OCI-LY7 (cell line): ENCODE measurements at regions of chr21 and their contacts with region 1.

Region 1: DNA sequence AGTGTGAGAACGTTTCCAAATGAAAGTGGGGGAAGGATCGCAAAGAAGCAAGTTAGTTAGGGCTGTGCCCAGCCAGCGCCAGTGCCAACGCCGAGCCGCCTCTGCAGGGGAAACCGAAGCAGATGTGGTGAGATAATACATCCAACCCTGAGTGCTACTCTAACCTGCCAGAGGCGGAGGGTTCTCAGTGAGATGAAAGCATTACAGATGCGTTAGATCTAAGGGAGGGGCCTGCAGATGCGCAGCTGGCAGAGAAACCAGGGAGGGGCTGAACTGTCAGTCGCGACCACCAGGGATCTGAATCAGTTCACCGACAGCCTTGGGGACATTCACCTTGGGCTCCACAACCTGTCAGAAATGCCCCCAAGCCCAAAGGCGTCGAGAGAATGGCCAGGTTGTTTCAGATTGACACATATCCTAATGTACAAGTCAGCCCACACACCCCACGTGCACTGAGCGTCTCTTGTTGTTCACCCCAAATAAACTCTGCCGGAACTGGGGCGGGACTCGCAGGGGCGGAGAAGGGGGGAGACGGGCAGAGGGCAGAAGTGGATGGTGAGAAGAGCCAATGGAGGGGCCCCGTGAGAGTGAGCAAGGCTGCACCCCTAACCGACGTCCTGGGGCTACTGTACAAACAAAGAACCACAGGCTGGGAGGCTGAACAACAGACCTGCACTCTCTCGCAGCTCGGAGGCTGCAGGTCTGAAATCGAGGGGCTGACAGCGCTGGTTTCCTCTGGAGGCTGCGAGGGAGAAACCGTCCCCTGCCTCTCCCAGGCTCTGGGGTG is 8.7 kb upstream of the UMODL1 start:
- DNase-seq: peak; percentile 93
- H3K4me3 ChIP-seq: peak overlapping the region; percentile 68
- H3K27ac ChIP-seq: peak overlapping the region; percentile 93
- H3K4me1 ChIP-seq: peaks cover 75% of the 10 kb centered on the region
- CTCF ChIP-seq: no peak

Region 2: DNA sequence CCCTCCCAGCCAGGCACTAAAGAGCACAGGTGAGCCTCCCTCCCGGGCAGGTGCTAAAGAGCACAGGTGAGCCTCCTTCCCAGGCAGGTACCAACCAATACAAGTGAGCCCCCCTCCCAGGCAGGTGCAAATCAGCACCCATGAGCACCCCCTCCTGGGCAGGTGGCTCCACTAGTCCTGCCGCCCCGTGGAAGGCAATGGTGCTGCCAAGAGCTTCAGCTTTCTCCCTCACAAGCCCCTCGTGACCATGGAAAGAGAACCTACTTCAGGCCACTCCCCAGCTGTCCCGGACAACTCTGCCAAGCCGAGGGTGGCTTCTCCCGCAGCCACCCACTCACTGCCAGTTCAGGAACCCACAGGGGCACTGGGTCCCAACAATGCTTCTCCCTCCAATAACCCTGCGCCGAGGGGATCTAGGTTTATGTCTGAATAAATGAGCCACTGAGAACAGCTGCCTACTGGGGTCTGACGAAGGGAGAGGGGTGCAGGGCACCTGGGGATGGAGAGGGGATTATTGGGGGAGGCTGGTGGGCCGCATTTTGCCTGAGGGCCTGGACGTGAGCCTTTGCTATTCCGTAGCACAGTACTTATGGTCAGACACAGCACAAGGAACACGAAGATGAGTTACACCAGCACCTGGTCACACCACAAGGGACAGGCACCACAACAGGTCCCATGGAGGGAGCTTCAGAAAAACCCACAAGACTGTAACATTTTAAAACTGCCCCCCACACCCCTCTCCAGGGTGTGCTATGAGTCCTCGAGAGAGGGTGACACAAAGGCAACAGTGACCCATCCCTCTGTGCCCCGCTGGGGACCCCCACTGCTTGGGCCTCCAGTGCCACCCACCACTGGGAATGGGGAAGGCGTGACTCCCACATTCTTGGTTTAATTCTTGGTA is 229.6 kb before region 1 on chr21:
- CTCF ChIA-PET with region 1: no interaction called
- POLR2A ChIA-PET with region 1: no interaction called
- intact Hi-C with region 1: loop called (anchors 2 kb)
- DNase-seq: peak; percentile 77
- H3K4me3 ChIP-seq: peak overlapping the region; percentile 43
- H3K27ac ChIP-seq: peak overlapping the region; percentile 95
- H3K4me1 ChIP-seq: peaks cover 71% of the 10 kb centered on the region
- CTCF ChIP-seq: peak; percentile 66

Region 3: GRCh38 chr21:41885341-41886029 is 176.9 kb before region 1 on chr21:
- CTCF ChIA-PET with region 1: no interaction called
- POLR2A ChIA-PET with region 1: no interaction called
- intact Hi-C with region 1: no loop called
- DNase-seq: peak; percentile 28
- H3K4me3 ChIP-seq: no peak overlapping the region
- H3K27ac ChIP-seq: no peak overlapping the region
- H3K4me1 ChIP-seq: peaks cover 18% of the 10 kb centered on the region
- CTCF ChIP-seq: 0 out of 2 replicates have a peak, but pooled peaks have one; percentile 30

Region 4: DNA sequence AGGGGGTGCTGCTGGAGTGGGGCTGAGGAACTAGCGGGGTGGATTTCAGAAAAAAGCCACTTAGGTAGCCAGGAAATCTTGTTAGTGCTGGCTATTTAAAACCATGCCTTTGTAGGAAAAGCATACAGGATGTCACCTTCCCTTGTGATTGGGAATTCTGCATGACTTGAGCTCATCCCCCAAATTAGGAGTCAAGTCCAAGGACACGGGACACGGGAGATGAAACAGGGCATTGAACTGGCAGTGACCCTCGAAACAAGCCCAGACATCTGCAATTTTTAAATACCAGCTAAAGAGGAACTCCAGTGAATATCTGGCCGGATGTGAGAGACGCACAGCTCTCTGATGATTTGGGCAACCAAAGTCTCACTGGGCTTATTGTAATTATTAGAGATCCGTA is 141.4 kb before region 1 on chr21:
- CTCF ChIA-PET with region 1: no interaction called
- POLR2A ChIA-PET with region 1: interaction called, 9 read pairs
- intact Hi-C with region 1: loop called (anchors 2 kb)
- DNase-seq: peak; percentile 77
- H3K4me3 ChIP-seq: no peak overlapping the region
- H3K27ac ChIP-seq: peak overlapping the region; percentile 74
- H3K4me1 ChIP-seq: peaks cover 54% of the 10 kb centered on the region
- CTCF ChIP-seq: no peak

Region 5: GRCh38 chr21:42107881-42108553 is 45.6 kb after region 1 on chr21:
- CTCF ChIA-PET with region 1: interaction called, 3 read pairs
- POLR2A ChIA-PET with region 1: interaction called, 11 read pairs
- intact Hi-C with region 1: loop called (anchors 1 kb)
- DNase-seq: peak; percentile 98
- H3K4me3 ChIP-seq: peak overlapping the region; percentile 55
- H3K27ac ChIP-seq: peak overlapping the region; percentile 89
- H3K4me1 ChIP-seq: peaks cover 38% of the 10 kb centered on the region
- CTCF ChIP-seq: peak; percentile 89

Region 6: GRCh38 chr21:42182713-42183371 is 120.4 kb after region 1 on chr21:
- CTCF ChIA-PET with region 1: no interaction called
- POLR2A ChIA-PET with region 1: no interaction called
- intact Hi-C with region 1: no loop called
- DNase-seq: no peak
- H3K4me3 ChIP-seq: no peak overlapping the region
- H3K27ac ChIP-seq: no peak overlapping the region
- H3K4me1 ChIP-seq: peaks cover 15% of the 10 kb centered on the region
- CTCF ChIP-seq: no peak

Region 7: GRCh38 chr21:42233067-42233961 is 170.9 kb after region 1 on chr21:
- CTCF ChIA-PET with region 1: no interaction called
- POLR2A ChIA-PET with region 1: no interaction called
- intact Hi-C with region 1: loop called (anchors 5 kb)
- DNase-seq: peak; percentile 97
- H3K4me3 ChIP-seq: peak overlapping the region; percentile 61
- H3K27ac ChIP-seq: peak overlapping the region; percentile 99
- H3K4me1 ChIP-seq: peaks cover 99% of the 10 kb centered on the region
- CTCF ChIP-seq: peak; percentile 64